ENCODE measurements at regions of chr6 and their contacts with region 1.

Region 1: GRCh38 chr6:165850434-165851019 is 187.5 kb upstream of the PDE10A start:
- DNase-seq: peak; percentile 69
- H3K4me3 Mint-ChIP-seq: no peak overlapping the region
- H3K27ac Mint-ChIP-seq: no peak overlapping the region
- H3K4me1 Mint-ChIP-seq: peaks cover 5% of the 10 kb centered on the region
- H3K27me3 Mint-ChIP-seq: peaks cover 54% of the 10 kb centered on the region

Region 2: DNA sequence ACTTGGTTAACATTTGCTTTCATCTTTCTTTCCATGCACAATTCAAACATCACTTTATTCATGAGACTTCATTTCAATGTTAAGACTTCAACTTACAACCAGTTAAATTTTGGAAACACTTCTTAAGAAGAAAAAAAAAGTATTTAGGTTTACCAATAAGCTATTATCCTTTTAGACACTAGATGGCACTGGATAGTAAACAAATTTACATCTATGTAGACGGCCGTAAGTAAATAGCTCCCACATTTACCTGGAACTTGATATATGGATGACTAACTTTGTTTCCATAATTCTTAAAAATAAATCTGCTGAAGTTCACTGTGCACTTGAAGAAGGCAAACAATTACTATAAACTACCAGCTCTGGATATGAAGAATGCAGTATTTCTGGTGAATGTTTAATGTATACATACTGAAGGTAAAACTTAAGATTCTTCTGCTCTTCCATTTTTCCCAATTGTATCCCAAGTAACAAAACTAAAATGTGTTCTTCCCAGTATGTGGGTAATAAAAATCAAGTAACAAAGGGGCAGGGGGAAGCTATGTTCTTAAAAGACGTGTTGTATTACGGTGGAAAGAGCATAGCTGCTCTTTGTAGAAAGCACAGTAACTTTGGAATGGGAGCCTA is 410.5 kb before region 1 on chr6:
- CTCF ChIA-PET with region 1: interaction called, 16 read pairs
- POLR2A ChIA-PET with region 1: no interaction called
- intact Hi-C with region 1: loop called (anchors 1 kb)
- DNase-seq: no peak
- H3K4me3 Mint-ChIP-seq: no peak overlapping the region
- H3K27ac Mint-ChIP-seq: no peak overlapping the region
- H3K4me1 Mint-ChIP-seq: no peaks in the 10 kb centered on the region
- H3K27me3 Mint-ChIP-seq: no peaks in the 10 kb centered on the region

Region 3: GRCh38 chr6:165729307-165729936 is 121.1 kb before region 1 on chr6:
- CTCF ChIA-PET with region 1: interaction called, 12 read pairs
- POLR2A ChIA-PET with region 1: no interaction called
- intact Hi-C with region 1: loop called (anchors 1 kb)
- DNase-seq: peak; percentile 33
- H3K4me3 Mint-ChIP-seq: no peak overlapping the region
- H3K27ac Mint-ChIP-seq: no peak overlapping the region
- H3K4me1 Mint-ChIP-seq: no peaks in the 10 kb centered on the region
- H3K27me3 Mint-ChIP-seq: peaks cover 2% of the 10 kb centered on the region